Activated B cell treated with CpG ODN at 0.5 μM for 24 hours (primary cell): ENCODE measurements at regions of chr1 and their contacts with region 1.

Region 1: GRCh38 chr1:86380257-86380861 is 15.8 kb downstream of the ODF2L start:
- DNase-seq: no peak
- ATAC-seq: peak; percentile 75
- H3K4me3 Mint-ChIP-seq: no peak overlapping the region
- H3K27ac Mint-ChIP-seq: no peak overlapping the region
- H3K4me1 Mint-ChIP-seq: peaks cover 8% of the 10 kb centered on the region
- H3K27me3 Mint-ChIP-seq: no peaks in the 10 kb centered on the region
- CTCF ChIP-seq: no peak

Region 2: GRCh38 chr1:86395771-86396497 is 15.6 kb after region 1 on chr1 and contains the start of gene ODF2L:
- CTCF ChIA-PET with region 1: interaction called, 6 read pairs
- POLR2A ChIA-PET with region 1: interaction called, 3 read pairs
- intact Hi-C with region 1: loop called (anchors 1 kb)
- DNase-seq: peak; percentile 78
- ATAC-seq: peak; percentile 99
- H3K4me3 Mint-ChIP-seq: peak within 1 kb of the TSS; percentile 98
- H3K27ac Mint-ChIP-seq: peak within 1 kb of the TSS; percentile 95
- H3K4me1 Mint-ChIP-seq: peaks cover 45% of the 10 kb centered on the region
- H3K27me3 Mint-ChIP-seq: no peaks in the 10 kb centered on the region
- CTCF ChIP-seq: no peak
- total RNA-seq, gene ODF2L: 28.2 and 36.1 TPM in 2 replicates

Region 3: DNA sequence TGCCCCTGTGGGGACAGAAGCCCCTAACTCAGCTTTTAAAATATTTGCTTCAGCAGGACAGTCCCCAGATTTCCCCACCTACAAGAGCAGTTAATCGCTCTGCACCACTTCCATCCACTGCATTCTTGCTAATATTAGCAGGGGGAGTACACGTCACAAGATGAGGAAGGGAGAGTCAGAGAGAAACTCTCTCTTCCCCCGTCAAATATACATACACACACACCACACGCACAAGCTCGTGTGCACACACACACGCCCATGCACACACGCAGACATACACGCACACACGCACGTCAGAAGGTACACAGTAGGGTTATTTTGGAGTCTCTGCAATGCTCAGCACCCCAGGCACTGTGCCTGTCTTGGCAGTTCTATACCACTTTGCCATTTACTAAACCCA is 90.5 kb after region 1 on chr1:
- CTCF ChIA-PET with region 1: interaction called, 5 read pairs
- POLR2A ChIA-PET with region 1: no interaction called
- intact Hi-C with region 1: loop called (anchors 1 kb)
- DNase-seq: no peak
- ATAC-seq: peak; percentile 56
- H3K4me3 Mint-ChIP-seq: no peak overlapping the region
- H3K27ac Mint-ChIP-seq: peak overlapping the region; percentile 6
- H3K4me1 Mint-ChIP-seq: peaks cover 6% of the 10 kb centered on the region
- H3K27me3 Mint-ChIP-seq: peaks cover 18% of the 10 kb centered on the region
- CTCF ChIP-seq: no peak

Region 4: GRCh38 chr1:86507935-86508582 is 127.7 kb after region 1 on chr1:
- CTCF ChIA-PET with region 1: interaction called, 28 read pairs
- POLR2A ChIA-PET with region 1: no interaction called
- intact Hi-C with region 1: no loop called
- DNase-seq: no peak
- ATAC-seq: no peak
- H3K4me3 Mint-ChIP-seq: no peak overlapping the region
- H3K27ac Mint-ChIP-seq: no peak overlapping the region
- H3K4me1 Mint-ChIP-seq: no peaks in the 10 kb centered on the region
- H3K27me3 Mint-ChIP-seq: peaks cover 11% of the 10 kb centered on the region
- CTCF ChIP-seq: no peak

Region 5: GRCh38 chr1:86704458-86704971 is 324.2 kb after region 1 on chr1 and contains the start of gene SH3GLB1:
- CTCF ChIA-PET with region 1: no interaction called
- POLR2A ChIA-PET with region 1: interaction called, 5 read pairs
- intact Hi-C with region 1: loop called (anchors 5 kb)
- DNase-seq: peak; percentile 92
- ATAC-seq: peak; percentile 87
- H3K4me3 Mint-ChIP-seq: peak within 1 kb of the TSS; percentile 99
- H3K27ac Mint-ChIP-seq: peak within 1 kb of the TSS; percentile 99
- H3K4me1 Mint-ChIP-seq: peaks cover 46% of the 10 kb centered on the region
- H3K27me3 Mint-ChIP-seq: no peaks in the 10 kb centered on the region
- CTCF ChIP-seq: peak; percentile 26
- total RNA-seq, gene SH3GLB1: 63.8 and 63.9 TPM in 2 replicates

Region 6: GRCh38 chr1:86833461-86834215 is 453.3 kb after region 1 on chr1:
- CTCF ChIA-PET with region 1: no interaction called
- POLR2A ChIA-PET with region 1: no interaction called
- intact Hi-C with region 1: loop called (anchors 5 kb)
- DNase-seq: peak; percentile 22
- ATAC-seq: peak; percentile 88
- H3K4me3 Mint-ChIP-seq: no peak overlapping the region
- H3K27ac Mint-ChIP-seq: peak overlapping the region; percentile 67
- H3K4me1 Mint-ChIP-seq: peaks cover 4% of the 10 kb centered on the region
- H3K27me3 Mint-ChIP-seq: no peaks in the 10 kb centered on the region
- CTCF ChIP-seq: no peak